A673 (cell line): ENCODE measurements at regions of chr19 and their contacts with region 1.

Region 1: DNA sequence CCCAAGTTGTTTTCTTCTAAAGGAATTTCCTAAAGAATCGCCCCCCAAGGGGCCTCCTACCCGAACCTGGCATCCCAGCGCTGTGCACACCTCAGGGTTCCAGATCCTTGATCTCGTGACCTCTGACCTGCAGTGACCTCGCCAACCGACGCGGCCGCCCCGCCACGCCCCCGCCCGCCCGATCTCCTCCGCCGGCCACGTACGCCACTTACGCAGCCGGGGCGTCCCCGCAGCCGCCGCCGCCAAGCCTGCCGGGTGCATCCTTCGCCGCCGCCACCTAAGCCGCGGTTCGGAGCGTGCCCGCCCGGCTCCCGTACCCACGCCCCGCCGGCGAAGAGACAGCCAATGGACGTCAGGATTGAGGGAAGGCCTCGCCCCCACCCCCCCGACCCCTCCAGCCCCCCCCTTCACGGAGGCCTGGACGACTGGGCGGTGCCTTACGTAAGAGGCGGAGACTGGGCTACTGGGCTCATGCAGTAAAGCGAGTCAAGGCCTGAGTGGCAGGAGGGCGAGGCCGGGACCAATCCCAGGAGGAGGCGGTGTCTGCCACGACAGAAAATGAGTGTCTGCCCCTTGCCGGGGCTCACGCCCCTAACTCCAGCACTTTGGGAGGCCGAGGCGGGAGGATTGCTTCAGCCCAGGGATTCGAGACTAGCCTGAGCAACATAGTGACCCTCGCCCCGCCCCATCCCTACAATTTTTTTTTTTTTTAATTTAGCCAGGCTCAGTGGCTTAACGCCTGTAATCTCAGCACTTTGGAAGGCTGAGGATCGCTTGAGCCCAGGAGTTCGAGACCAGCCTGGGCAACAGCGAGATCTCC is at the start of gene YIF1B:
- DNase-seq: peak; percentile 98
- H3K4me3 ChIP-seq: peak within 1 kb of the TSS; percentile 86
- H3K27ac ChIP-seq: peak within 1 kb of the TSS; percentile 85
- H3K4me1 ChIP-seq: peaks cover 12% of the 10 kb centered on the region
- H3K27me3 ChIP-seq: peaks cover 24% of the 10 kb centered on the region
- CTCF ChIP-seq: no peak
- total RNA-seq, gene YIF1B: 57.6 and 66.2 TPM in 2 replicates

Region 2: GRCh38 chr19:38245826-38246498 is 69.9 kb before region 1 on chr19:
- CTCF ChIA-PET with region 1: no interaction called
- POLR2A ChIA-PET with region 1: no interaction called
- intact Hi-C with region 1: loop called (anchors 5 kb)
- DNase-seq: no peak
- H3K4me3 ChIP-seq: no peak overlapping the region
- H3K27ac ChIP-seq: no peak overlapping the region
- H3K4me1 ChIP-seq: no peaks in the 10 kb centered on the region
- H3K27me3 ChIP-seq: no peaks in the 10 kb centered on the region
- CTCF ChIP-seq: no peak